Activated CD4-positive, alpha-beta T cell treated with anti-CD3 and anti-CD28 coated beads for 36 hours (primary cell): ENCODE measurements at regions of chr11 and their contacts with region 1.

Region 1: GRCh38 chr11:35082321-35083182 is 56.4 kb upstream of the CD44 start:
- DNase-seq: peak; percentile 89
- ATAC-seq: peak; percentile 78
- H3K4me3 Mint-ChIP-seq: peak overlapping the region; percentile 30
- H3K27ac Mint-ChIP-seq: peak overlapping the region; percentile 85
- H3K4me1 Mint-ChIP-seq: peaks cover 93% of the 10 kb centered on the region
- H3K27me3 Mint-ChIP-seq: no peaks in the 10 kb centered on the region

Region 2: DNA sequence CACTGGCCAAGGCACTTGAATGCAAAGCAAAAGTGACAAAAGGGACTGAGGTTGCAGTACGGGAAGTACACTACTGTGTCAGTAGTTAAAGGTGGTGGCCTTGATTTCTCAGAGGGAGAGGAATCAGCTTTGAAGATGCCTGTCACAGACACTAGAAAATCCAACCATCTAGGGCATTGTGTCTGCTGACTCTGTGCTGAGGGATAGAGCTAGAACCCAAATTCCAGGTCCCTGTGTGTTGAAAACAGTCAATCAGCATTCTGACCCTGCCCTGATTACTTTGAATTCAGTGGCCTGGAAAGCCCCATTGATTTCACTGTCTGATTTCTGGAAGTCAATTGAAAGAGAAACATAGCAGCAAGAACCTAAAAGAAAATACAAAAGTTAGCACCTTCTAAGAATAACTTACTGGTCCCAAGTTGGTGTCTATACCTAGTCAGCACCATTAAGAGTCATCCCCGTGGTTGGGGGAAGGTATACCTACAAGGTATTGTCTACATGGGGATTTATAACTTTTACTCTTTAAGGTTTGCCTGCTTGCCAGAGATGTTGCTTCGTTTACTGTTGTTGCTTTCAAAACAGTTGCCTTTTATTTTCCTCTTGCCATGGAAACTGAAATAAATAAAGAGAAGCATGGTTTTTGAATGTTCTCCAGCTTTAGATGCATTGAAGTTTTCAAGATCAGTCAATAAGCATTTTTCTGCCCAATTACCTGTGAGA is 68.9 kb before region 1 on chr11:
- CTCF ChIA-PET with region 1: interaction called, 4 read pairs
- POLR2A ChIA-PET with region 1: interaction called, 3 read pairs
- intact Hi-C with region 1: loop called (anchors 1 kb)
- DNase-seq: peak; percentile 54
- ATAC-seq: peak; percentile 75
- H3K4me3 Mint-ChIP-seq: peak overlapping the region; percentile 34
- H3K27ac Mint-ChIP-seq: peak overlapping the region; percentile 74
- H3K4me1 Mint-ChIP-seq: peaks cover 49% of the 10 kb centered on the region
- H3K27me3 Mint-ChIP-seq: peaks cover 2% of the 10 kb centered on the region

Region 3: GRCh38 chr11:35126000-35126878 is 43.7 kb after region 1 on chr11:
- CTCF ChIA-PET with region 1: interaction called, 4 read pairs
- POLR2A ChIA-PET with region 1: no interaction called
- intact Hi-C with region 1: loop called (anchors 1 kb)
- DNase-seq: peak; percentile 76
- ATAC-seq: peak; percentile 82
- H3K4me3 Mint-ChIP-seq: peak overlapping the region; percentile 58
- H3K27ac Mint-ChIP-seq: peak overlapping the region; percentile 92
- H3K4me1 Mint-ChIP-seq: peaks cover 69% of the 10 kb centered on the region
- H3K27me3 Mint-ChIP-seq: no peaks in the 10 kb centered on the region

Region 4: GRCh38 chr11:35173011-35173511 is 90.5 kb after region 1 on chr11:
- CTCF ChIA-PET with region 1: no interaction called
- POLR2A ChIA-PET with region 1: no interaction called
- intact Hi-C with region 1: loop called in 1 of 2 experiments (anchors 1 kb)
- DNase-seq: no peak
- ATAC-seq: no peak
- H3K4me3 Mint-ChIP-seq: no peak overlapping the region
- H3K27ac Mint-ChIP-seq: peak overlapping the region; percentile 83
- H3K4me1 Mint-ChIP-seq: peaks cover 97% of the 10 kb centered on the region
- H3K27me3 Mint-ChIP-seq: no peaks in the 10 kb centered on the region

Region 5: GRCh38 chr11:35227576-35228327 is 145.2 kb after region 1 on chr11:
- CTCF ChIA-PET with region 1: no interaction called
- POLR2A ChIA-PET with region 1: no interaction called
- intact Hi-C with region 1: no loop called
- DNase-seq: no peak
- ATAC-seq: no peak
- H3K4me3 Mint-ChIP-seq: no peak overlapping the region
- H3K27ac Mint-ChIP-seq: peak overlapping the region; percentile 58
- H3K4me1 Mint-ChIP-seq: peaks cover 10% of the 10 kb centered on the region
- H3K27me3 Mint-ChIP-seq: no peaks in the 10 kb centered on the region